A549 (cell line): ENCODE measurements at regions of chr2 and their contacts with region 1.

Region 1: GRCh38 chr2:217993817-217994463 is 8.9 kb downstream of the TNS1 start:
- DNase-seq: peak; percentile 33 to 70
- ATAC-seq: peak; percentile 57 to 87
- H3K4me3 ChIP-seq: peak overlapping the region; percentile 16; the same call in 1 of the 3 replicates
- H3K27ac ChIP-seq: peak overlapping the region; percentile 80 to 86
- H3K4me1 ChIP-seq: peaks cover 54% of the 10 kb centered on the region
- CTCF ChIP-seq: peak; percentile 69
- EP300 ChIP-seq: no peak
- POLR2A ChIP-seq: no peak
- RAD21 ChIP-seq: peak; percentile 32 to 42; a peak in 3 of 5 replicates

Region 2: DNA sequence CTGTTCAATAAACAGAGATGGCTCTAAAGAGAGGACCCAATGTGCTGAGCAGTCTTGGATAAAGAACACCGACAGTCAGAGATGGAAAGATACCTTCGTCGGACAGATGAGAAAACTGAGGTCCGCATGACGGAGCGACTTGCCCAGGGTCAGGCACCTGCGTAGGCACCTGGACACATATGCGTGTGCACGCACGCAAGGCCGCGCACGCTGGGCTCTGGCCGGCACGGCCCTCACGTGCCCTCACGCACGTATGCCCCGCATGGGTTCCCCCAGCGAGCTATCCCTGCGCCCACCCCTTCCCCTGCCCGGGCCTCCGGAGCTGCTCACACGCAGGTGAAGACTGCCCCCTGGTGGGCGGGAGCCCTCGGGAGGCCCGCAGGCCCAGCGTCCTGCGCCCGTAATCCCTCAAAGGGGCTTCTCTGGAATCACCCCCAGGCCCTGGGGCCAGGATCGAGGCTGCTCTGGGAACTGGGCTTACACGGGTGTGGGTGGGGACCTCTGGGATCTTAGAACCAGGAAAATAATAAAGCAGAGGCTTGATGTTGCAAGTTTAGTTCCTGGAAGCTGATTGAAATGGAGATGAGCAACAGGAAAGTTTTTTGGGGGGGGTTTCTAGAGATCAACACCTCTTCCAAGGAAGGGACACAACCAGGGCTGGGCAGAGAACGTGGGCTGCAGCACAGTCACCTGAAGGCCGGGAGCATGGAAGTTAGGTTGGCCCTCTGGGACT is 237.4 kb before region 1 on chr2:
- CTCF ChIA-PET with region 1: no interaction called
- POLR2A ChIA-PET with region 1: no interaction called
- DNase-seq: peak; percentile 44 to 60
- ATAC-seq: peak; percentile 79 to 97
- H3K4me3 ChIP-seq: no peak overlapping the region
- H3K27ac ChIP-seq: no peak overlapping the region
- H3K4me1 ChIP-seq: no peaks in the 10 kb centered on the region
- CTCF ChIP-seq: peak; percentile 85
- EP300 ChIP-seq: no peak
- POLR2A ChIP-seq: no peak
- RAD21 ChIP-seq: peak; percentile 71 to 91

Region 3: DNA sequence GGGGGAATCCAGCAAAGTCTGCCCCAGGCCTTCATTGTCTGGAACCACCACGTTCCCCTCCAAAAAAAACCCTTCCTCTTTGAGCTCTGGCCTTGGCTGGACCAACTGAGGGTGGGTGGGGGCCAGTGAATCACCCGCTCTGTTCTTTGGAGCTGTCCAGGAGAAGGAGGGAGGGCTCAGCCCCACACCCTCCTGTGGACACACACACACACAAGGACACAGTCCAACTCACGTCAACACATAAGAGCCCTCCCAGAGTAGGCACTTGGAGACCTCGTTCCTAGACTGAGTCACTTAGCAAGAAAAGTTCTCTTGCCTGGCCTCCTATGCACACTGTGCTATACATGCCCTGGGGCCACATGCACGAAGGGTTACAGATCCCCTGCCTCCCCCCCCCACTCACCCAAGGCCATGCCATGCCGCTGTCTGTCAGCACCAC is 10.1 kb after region 1 on chr2:
- CTCF ChIA-PET with region 1: interaction called, 20 read pairs
- POLR2A ChIA-PET with region 1: no interaction called
- DNase-seq: peak in 1 of 2 experiments; percentile 73
- ATAC-seq: peak; percentile 51 to 77; a peak in 5 of 6 replicates
- H3K4me3 ChIP-seq: no peak overlapping the region
- H3K27ac ChIP-seq: peak overlapping the region; percentile 79 to 91
- H3K4me1 ChIP-seq: peaks cover 74% of the 10 kb centered on the region
- CTCF ChIP-seq: no peak
- EP300 ChIP-seq: peak in 1 of 2 experiments; percentile 38; a peak in 1 of 5 replicates
- POLR2A ChIP-seq: no peak
- RAD21 ChIP-seq: no peak

Region 4: GRCh38 chr2:218015586-218016521 is 21.9 kb after region 1 on chr2:
- CTCF ChIA-PET with region 1: interaction called, 11 read pairs
- POLR2A ChIA-PET with region 1: no interaction called
- DNase-seq: no peak
- ATAC-seq: no peak
- H3K4me3 ChIP-seq: no peak overlapping the region
- H3K27ac ChIP-seq: no peak overlapping the region
- H3K4me1 ChIP-seq: peaks cover 10% of the 10 kb centered on the region; the same call in 1 of the 3 replicates
- CTCF ChIP-seq: no peak
- EP300 ChIP-seq: no peak
- POLR2A ChIP-seq: no peak
- RAD21 ChIP-seq: no peak

Region 5: DNA sequence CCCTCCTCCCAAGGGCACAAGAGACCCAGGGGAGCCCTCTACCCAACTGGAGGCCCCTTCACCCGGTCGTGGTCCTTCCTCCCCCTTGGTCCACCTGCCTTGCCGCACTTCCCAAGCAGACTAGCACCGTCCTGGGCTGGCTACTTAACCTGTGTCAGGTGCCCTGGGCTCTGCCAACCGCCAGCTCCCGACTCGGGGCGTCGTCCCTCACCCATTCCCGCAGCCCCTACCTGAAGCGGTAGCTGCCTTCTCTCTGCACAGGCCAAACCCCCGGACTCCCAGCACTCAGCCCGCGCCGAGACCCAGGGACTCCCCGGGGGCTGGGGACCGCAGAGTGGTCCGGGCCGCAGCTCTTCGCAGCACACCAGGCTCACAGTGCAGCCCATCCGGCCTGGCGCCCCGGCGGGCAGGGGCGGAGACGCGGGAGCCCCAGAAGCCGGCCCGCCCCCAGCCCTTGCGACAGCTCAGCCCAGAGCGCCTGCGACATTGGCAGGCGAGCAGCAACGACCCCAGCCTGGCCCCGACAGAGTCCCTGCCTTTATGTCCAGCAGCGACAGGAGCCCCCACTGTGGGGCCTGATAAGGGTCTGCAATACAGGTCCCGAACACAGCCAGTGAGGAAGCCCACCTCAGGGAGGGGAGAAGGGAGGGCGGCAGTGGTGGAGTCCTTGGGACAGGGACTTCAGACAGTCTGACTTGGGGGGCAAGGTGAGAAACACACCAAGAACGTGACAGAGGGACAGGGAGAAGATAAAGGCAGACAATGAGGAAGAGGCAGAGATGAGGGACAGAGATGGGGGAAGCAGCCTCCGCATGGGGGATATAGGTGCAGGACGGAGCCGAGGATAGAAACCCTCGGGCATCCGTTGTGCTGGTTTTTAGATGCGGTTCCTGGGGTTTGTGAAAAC is 39.9 kb after region 1 on chr2:
- CTCF ChIA-PET with region 1: interaction called, 10 read pairs
- POLR2A ChIA-PET with region 1: no interaction called
- DNase-seq: no peak
- ATAC-seq: peak in 1 of 2 experiments; percentile 17; a peak in 3 of 6 replicates
- H3K4me3 ChIP-seq: no peak overlapping the region
- H3K27ac ChIP-seq: peak overlapping the region; percentile 53 to 83; a peak in 5 of 6 replicates
- H3K4me1 ChIP-seq: peaks cover 4% of the 10 kb centered on the region; the same call in 1 of the 3 replicates
- CTCF ChIP-seq: no peak
- EP300 ChIP-seq: no peak
- POLR2A ChIP-seq: no peak
- RAD21 ChIP-seq: no peak